ENCODE measurements at regions of chr7 and their contacts with region 1.

Region 1: DNA sequence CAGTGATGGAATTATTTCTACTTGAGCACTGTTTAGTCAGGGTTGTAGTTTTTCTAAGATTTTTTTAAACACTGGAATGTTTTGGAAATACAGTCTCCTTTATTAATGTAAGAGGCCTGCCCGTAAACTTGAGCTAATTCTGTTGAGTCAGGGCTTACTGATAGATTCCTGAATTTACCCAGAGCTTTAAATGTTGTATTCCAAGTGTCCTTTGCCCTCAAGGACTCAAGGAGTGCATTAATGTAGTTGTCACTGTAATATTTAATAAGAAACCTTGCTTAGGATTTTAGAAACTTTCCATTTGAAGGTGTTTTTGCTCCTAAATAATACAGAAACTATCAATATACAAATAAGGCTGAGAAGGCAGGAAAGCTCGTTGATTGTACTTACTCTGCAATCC is 89.2 kb downstream of the MACC1 start:
- DNase-seq: no peak
- CTCF ChIP-seq: no peak

Region 2: GRCh38 chr7:20114468-20114867 is 13.5 kb before region 1 on chr7:
- CTCF ChIA-PET with region 1: interaction called, 11 read pairs
- POLR2A ChIA-PET with region 1: no interaction called
- DNase-seq: peak; percentile 41
- CTCF ChIP-seq: no peak